ENCODE measurements at regions of chr2 and their contacts with region 1.

Region 1: GRCh38 chr2:100941646-100942240 is 60.3 kb upstream of the RPL31 start:
- DNase-seq: peak; percentile 30
- H3K4me3 Mint-ChIP-seq: peak overlapping the region; percentile 55
- H3K27ac Mint-ChIP-seq: peak overlapping the region; percentile 86
- H3K4me1 Mint-ChIP-seq: peaks cover 31% of the 10 kb centered on the region
- H3K27me3 Mint-ChIP-seq: no peaks in the 10 kb centered on the region

Region 2: DNA sequence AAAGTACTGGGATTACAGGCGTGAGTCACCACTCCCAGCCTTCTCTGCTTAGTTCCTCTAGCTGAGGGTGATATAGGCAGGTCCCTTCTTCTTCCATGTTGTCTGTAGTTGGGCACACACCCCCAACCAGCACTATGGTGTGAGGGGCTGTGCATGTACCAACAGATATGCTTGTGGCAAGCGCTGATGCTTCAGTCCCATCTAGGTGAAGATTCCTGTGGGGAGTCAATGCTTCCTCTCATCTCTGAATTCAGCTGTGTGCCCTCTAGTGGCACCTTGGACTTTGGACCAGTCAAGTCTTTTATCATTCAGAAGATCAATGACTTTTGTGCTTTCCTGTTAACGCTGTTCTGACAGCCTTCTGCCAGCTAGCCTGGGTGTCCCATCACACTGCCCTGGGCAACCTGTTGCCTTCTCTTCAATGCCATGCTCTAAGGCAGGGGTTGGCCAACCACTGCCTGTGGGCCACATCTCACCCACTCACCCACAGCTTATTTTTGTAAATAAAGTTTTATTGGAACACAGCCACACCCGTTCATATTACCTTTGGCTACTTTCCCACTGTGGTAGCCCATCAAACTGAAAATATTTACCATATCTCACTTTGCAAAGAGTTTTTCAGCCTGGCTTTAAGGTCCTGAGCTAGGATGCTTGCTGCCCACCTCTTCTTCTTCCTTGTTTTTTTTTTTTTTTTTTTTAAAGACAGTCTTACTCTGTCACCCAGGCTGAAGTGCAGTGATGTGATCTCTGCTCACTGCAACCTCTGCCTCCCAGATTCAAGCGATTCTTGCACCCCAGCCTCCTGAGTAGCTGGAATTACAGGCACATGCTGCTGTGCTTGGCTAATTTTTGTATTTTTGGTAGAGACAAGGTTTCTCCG is 70.9 kb before region 1 on chr2:
- CTCF ChIA-PET with region 1: no interaction called
- intact Hi-C with region 1: loop called (anchors 5 kb)
- DNase-seq: no peak
- H3K4me3 Mint-ChIP-seq: no peak overlapping the region
- H3K27ac Mint-ChIP-seq: no peak overlapping the region
- H3K4me1 Mint-ChIP-seq: peaks cover 5% of the 10 kb centered on the region
- H3K27me3 Mint-ChIP-seq: no peaks in the 10 kb centered on the region

Measured in activated naive CD4-positive, alpha-beta T cell treated with anti-CD3 and anti-CD28 coated beads for 36 hours (primary cell).